ENCODE measurements at regions of chr2 and their contacts with region 1.

Region 1: DNA sequence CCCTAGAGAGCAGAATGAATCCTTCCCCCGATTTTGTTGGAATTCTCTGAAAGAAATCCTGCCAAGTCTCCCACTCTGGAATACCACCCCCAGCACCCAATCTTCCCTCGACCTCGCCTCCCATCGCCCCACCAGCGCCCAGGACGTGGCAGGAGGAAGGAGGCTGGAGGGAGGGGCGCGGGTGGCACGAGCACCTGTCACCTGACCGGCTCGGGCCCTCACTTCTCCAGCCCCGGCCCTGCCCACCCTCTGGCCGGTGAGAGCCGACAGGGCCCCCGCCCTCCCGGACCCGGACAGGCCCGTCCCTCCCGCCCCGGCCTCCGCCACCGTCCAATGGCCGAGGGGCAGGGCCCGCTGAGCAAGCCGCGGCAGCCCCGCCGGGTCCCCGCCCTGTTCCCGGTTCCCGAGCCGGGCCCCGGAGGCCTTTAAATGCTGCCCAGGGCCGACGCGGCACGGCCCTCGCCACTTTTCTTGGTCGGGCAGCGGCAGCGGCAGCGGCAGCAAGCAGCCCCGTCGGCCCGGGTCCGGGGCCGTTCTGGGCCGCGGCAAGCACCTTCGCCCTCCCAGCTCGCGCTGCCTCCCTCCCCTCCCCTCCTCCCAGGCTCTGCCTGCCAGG is at the start of gene LGALSL:
- DNase-seq: peak; percentile 88
- H3K4me3 ChIP-seq: peak within 1 kb of the TSS; percentile 78
- H3K27ac ChIP-seq: peak within 1 kb of the TSS; percentile 93
- H3K4me1 ChIP-seq: peaks cover 6% of the 10 kb centered on the region
- H3K27me3 ChIP-seq: no peaks in the 10 kb centered on the region
- CTCF ChIP-seq: no peak
- total RNA-seq, gene LGALSL: 26.4 to 34.8 TPM

Region 2: GRCh38 chr2:64405581-64406406 is 48.1 kb before region 1 on chr2:
- intact Hi-C with region 1: loop called (anchors 5 kb)
- DNase-seq: peak; percentile 41
- H3K4me3 ChIP-seq: no peak overlapping the region
- H3K27ac ChIP-seq: peak overlapping the region; percentile 71
- H3K4me1 ChIP-seq: peaks cover 27% of the 10 kb centered on the region
- H3K27me3 ChIP-seq: no peaks in the 10 kb centered on the region
- CTCF ChIP-seq: no peak